ENCODE measurements at regions of chr18 and their contacts with region 1.

Region 1: DNA sequence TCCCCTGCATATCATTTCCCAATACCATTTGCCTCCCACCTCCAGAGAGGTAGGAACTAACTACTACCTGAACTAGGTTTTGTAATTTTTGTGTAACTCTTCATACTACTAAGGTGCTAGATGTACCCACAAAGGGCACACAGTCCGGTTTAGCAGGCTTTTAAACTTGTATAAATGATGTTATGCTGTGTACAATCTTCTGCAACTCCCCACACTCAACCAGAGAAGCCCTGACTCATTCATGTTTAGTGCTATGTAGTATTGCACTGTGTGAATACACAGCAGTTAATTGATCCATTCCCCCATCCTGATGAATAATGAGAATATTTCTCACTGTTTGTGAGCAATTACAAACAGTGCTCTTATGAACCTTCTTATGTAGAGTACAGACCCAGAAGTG is 285.6 kb downstream of the SMAD2 start:
- DNase-seq: no peak
- ATAC-seq: no peak
- H3K4me3 Mint-ChIP-seq: no peak overlapping the region
- H3K27ac Mint-ChIP-seq: no peak overlapping the region
- H3K4me1 Mint-ChIP-seq: peaks cover 5% of the 10 kb centered on the region
- H3K27me3 Mint-ChIP-seq: no peaks in the 10 kb centered on the region
- CTCF ChIP-seq: no peak

Region 2: DNA sequence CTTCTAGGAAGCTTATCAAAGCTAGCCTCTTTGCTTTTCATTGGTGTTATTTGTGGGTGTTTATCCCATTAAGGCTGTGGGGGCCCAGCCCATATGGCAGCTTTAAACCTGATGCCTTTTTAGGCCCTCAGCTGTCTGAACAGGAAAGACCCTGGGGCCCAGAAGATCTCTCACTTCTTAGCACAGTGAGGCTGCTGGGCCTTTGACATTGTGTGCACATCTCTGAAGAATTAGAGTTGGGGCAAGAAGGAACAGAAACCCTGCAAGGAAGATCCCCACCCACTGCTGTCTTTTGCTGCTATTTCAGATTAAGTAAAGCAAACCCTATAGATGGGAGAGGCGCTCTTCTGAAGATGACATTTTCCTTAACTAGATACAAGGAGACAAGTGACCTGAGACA is 35.6 kb after region 1 on chr18:
- CTCF ChIA-PET with region 1: no interaction called
- POLR2A ChIA-PET with region 1: no interaction called
- intact Hi-C with region 1: loop called (anchors 2 kb)
- DNase-seq: no peak
- ATAC-seq: peak; percentile 72
- H3K4me3 Mint-ChIP-seq: peak overlapping the region; percentile 48
- H3K27ac Mint-ChIP-seq: peak overlapping the region; percentile 91
- H3K4me1 Mint-ChIP-seq: peaks cover 77% of the 10 kb centered on the region
- H3K27me3 Mint-ChIP-seq: no peaks in the 10 kb centered on the region
- CTCF ChIP-seq: no peak

Region 3: DNA sequence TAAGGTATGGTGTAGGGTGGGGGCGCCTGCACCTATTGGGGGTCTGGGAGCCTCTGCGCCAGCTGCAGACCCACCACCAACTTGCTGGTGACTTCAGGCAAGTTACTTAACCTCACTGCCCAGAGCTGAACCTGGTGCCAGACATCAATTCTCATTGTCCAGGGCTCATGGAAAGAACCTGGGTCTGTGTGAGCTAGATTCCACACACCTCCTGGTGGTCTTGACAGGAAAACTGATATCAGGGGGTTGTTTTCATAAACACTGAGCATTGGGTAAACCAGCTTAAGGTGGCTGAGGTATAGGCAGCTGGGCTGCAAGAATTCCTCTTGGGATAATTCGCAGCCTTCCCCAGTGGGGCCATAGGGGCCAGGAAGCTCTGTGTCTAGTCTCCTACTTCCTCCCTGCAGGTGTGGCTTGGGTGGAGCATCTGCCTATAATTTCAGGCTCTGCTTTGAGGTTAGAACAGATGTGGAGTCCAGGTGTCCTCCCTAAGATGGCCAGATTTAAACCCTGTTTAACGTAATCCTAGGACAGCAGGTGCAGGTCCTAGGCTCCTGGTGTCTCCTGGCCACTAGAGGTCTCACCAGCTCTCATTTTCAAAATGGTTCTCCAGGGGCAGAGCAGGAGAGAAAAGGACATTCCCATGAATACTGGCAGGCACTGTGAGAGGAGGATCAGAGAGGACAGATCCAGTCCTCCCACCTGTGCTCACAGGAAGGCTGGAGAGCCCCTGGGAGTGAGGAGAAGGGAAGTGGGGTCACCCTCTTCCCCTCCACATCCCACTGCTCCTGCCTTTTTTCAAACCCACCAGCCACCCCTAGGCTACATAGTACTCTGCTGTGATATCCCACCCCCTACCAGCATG is 386.0 kb after region 1 on chr18:
- CTCF ChIA-PET with region 1: no interaction called
- POLR2A ChIA-PET with region 1: no interaction called
- intact Hi-C with region 1: no loop called
- DNase-seq: no peak
- ATAC-seq: no peak
- H3K4me3 Mint-ChIP-seq: no peak overlapping the region
- H3K27ac Mint-ChIP-seq: no peak overlapping the region
- H3K4me1 Mint-ChIP-seq: no peaks in the 10 kb centered on the region
- H3K27me3 Mint-ChIP-seq: peaks cover 5% of the 10 kb centered on the region
- CTCF ChIP-seq: no peak

Measured in activated B cell treated with CpG ODN at 0.5 μM for 24 hours (primary cell).